ENCODE measurements at regions of chr9 and their contacts with region 1.

Region 1: GRCh38 chr9:137302176-137302994 is at the start of gene NRARP:
- DNase-seq: peak; percentile 89
- ATAC-seq: peak; percentile 79
- H3K4me3 Mint-ChIP-seq: peak within 1 kb of the TSS; percentile 70
- H3K27ac Mint-ChIP-seq: no peak within 1 kb of the TSS
- H3K4me1 Mint-ChIP-seq: peaks cover 17% of the 10 kb centered on the region
- H3K27me3 Mint-ChIP-seq: peaks cover 31% of the 10 kb centered on the region
- total RNA-seq, gene NRARP: 1.6 to 4.5 TPM

Region 2: DNA sequence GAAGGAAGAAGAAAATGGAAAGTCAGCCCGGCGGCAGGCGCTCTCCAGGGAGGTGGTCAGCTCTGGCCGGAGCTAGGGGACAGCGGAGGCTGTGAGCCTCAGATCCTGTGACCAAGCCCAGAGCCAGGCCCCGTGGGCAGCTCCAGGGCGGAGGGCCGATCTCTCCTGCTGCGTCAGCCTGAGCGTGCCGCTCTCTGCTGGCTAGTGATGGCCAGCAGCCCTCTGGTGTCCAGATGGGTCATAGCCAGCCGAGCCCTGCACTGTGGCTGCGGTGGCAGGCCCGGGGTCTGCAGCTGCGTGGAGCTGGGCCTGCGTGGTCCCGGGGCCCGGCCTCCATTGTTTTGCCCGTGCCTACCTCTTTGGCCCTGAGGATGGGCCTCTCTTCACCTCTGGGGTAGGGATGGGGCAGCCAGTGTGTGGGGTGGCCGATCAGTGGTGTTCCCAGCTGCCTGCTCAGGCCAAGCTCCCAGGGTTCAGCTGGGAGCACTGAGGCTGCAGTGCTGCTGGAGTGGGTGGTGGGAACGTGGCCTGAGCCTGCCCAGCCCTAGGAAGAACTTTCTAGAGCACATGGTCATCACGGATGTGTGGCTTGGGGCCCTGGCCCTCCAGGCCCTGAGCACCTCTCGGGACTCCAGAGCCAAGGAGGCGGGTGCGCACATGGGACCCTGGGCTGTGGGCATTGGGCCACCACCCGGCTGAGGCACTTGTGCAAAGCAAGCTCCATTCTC is 16.8 kb after region 1 on chr9:
- CTCF ChIA-PET with region 1: interaction called, 12 read pairs
- DNase-seq: no peak
- ATAC-seq: no peak
- H3K4me3 Mint-ChIP-seq: no peak overlapping the region
- H3K27ac Mint-ChIP-seq: no peak overlapping the region
- H3K4me1 Mint-ChIP-seq: peaks cover 11% of the 10 kb centered on the region
- H3K27me3 Mint-ChIP-seq: no peaks in the 10 kb centered on the region

Region 3: DNA sequence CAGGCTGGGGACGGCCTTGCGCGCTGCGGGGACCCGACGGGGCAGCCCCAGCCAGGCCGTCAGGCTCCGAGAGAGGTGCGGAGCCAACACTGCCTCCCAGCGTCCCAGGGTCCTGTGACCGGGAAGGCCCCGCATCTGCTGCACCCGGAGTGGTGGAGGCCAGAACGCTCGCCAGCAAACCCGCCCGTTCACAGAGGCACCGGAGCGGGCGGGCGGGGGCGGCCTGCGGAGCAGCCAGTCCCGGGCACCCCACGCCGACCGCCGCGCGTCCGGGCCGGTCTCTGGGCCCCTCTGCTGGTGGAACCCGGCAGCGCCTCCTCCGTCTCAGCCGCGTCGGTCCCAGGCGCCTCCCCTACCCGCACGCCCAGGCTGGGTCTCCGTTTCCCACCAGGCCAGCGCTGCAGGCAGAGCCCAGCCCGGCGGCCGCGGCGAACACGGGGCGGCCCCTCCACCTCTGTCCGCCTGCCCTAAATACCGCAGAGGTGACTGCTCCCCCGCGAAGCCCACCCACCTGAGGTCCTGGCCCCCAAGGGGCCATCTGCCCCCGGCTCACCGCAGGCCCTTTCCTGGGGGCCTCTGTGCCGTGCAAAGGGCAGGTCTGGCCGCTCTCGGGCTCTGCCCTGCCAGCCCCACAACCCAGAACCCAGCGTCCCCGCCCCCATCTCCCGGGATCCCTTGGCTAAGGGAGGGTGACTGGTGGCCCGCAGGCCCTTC is 104.6 kb after region 1 on chr9:
- CTCF ChIA-PET with region 1: interaction called, 15 read pairs
- DNase-seq: peak; percentile 71
- ATAC-seq: peak; percentile 92
- H3K4me3 Mint-ChIP-seq: no peak overlapping the region
- H3K27ac Mint-ChIP-seq: no peak overlapping the region
- H3K4me1 Mint-ChIP-seq: peaks cover 11% of the 10 kb centered on the region
- H3K27me3 Mint-ChIP-seq: peaks cover 8% of the 10 kb centered on the region